ENCODE measurements at regions of chr20 and their contacts with region 1.

Region 1: DNA sequence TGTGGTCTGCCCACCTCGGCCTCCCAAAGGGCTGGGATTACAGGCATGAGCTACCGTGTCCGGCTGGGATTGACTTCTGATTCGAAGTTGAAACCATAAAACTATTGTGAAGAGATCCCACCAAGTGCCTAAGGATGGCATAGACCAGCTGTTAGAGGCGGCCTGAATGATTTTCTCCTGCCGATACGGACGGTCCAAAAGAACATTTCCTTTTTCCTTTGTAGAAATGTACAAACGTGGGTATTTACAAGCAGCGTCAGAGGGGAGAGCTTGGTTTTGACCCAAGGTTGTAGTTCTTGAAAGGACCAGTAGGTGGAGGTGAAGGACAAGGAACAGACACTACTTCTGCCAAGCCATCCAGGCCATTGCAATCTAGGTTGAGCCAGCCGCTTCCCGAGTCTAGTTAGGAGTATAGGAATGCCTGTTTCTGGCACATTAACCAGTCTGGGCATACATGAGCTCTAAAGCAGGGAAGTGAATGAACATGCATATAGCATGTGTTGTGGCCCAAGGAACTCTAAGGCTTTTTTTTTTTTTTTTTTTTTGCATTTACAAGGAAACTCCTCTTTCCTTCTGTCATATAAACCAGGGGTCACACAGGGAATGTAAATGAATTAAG is 29.1 kb downstream of the MOCS3 start:
- DNase-seq: peak; percentile 82
- H3K4me3 ChIP-seq: no peak overlapping the region
- H3K27ac ChIP-seq: no peak overlapping the region
- H3K4me1 ChIP-seq: no peaks in the 10 kb centered on the region
- H3K27me3 ChIP-seq: no peaks in the 10 kb centered on the region
- CTCF ChIP-seq: peak; percentile 86

Region 2: DNA sequence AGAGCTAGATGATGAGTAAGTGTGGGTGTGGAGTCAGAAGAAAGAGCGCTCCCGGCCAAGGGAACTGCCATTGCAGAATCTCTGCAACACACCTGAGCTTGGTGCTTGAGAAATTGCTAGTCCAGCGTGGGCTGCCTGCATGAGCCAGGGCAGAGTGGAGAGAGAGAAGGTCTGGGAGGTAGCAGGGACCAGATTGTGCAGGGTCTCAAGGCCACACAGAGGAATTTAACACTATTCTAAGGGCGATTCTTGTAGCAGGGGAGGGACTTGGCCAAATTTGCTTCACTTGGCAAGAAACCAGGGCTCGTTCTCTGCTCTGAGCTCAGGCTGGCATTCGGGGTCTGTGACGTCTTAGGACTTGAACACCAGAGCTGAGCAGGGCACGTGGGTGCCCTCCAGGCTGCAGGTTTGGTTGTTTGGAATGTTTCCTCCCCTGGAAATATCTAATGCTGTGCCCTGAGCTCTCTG is 139.3 kb before region 1 on chr20:
- intact Hi-C with region 1: no loop called
- DNase-seq: no peak
- H3K4me3 ChIP-seq: no peak overlapping the region
- H3K27ac ChIP-seq: no peak overlapping the region
- H3K4me1 ChIP-seq: no peaks in the 10 kb centered on the region
- H3K27me3 ChIP-seq: no peaks in the 10 kb centered on the region
- CTCF ChIP-seq: no peak

Region 3: GRCh38 chr20:51306503-51307358 is 319.0 kb after region 1 on chr20:
- intact Hi-C with region 1: loop called (anchors 5 kb)
- DNase-seq: peak; percentile 73
- H3K4me3 ChIP-seq: no peak overlapping the region
- H3K27ac ChIP-seq: no peak overlapping the region
- H3K4me1 ChIP-seq: no peaks in the 10 kb centered on the region
- H3K27me3 ChIP-seq: no peaks in the 10 kb centered on the region
- CTCF ChIP-seq: peak; percentile 87

Measured in colonic mucosa (tissue), 4 donors.